Activated CD4-positive, alpha-beta memory T cell treated with anti-CD3 and anti-CD28 coated beads, Interleukin-2, amount 10 ng/mL, durations not matched to agents 7 days and 5 days (primary cell): ENCODE measurements at regions of chr9 and their contacts with region 1.

Region 1: GRCh38 chr9:6412487-6413364 is at the start of gene UHRF2:
- DNase-seq: peak; percentile 100
- H3K4me3 Mint-ChIP-seq: peak within 1 kb of the TSS; percentile 81
- H3K27ac Mint-ChIP-seq: peak within 1 kb of the TSS; percentile 94
- H3K4me1 Mint-ChIP-seq: peaks cover 35% of the 10 kb centered on the region
- H3K27me3 Mint-ChIP-seq: peaks cover 2% of the 10 kb centered on the region
- total RNA-seq, gene UHRF2: 77.3 to 77.9 TPM

Region 2: DNA sequence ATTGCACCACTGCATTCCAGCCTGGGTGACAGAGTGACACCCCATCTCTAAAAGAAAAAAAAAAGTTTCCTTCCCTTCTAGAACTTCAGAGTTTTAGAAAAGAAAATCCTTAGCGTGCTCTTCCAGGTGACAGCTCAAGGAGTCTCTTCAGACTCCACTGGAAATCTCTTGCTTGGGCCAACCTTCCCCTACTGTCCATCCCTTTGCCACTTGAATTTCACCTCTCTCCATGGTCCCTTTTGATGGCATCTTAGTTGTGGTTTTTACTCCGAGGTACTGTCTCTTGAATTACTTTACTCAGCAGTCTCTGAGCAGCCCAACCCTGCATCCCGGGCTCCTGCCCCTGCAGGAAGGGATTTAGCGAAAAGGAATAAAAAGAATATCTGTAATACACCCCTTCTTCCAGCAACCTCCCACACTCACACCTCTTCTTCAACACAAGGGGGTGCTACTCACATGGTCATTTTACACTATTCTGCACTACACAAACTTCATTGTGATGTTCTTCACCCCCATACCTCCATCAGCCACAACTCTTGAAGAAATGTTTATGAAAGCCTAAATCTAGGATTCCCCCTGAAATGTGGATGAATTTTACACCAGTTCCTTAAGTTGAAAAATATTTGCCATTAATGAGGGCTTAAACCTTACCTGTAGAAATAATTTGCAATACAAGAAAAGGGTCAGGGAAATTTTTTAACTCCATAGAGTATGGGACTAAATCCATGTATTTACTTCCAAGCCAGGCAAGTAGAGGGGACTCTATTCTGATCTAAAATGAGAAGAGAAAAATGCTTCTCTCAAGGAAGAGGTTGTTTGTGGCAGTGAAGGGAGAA is 58.7 kb before region 1 on chr9:
- CTCF ChIA-PET with region 1: interaction called, 5 read pairs
- POLR2A ChIA-PET with region 1: interaction called, 13 read pairs
- DNase-seq: peak; percentile 27
- H3K4me3 Mint-ChIP-seq: no peak overlapping the region
- H3K27ac Mint-ChIP-seq: no peak overlapping the region
- H3K4me1 Mint-ChIP-seq: peaks cover 21% of the 10 kb centered on the region
- H3K27me3 Mint-ChIP-seq: peaks cover 19% of the 10 kb centered on the region

Region 3: GRCh38 chr9:6473149-6473548 is 60.4 kb after region 1 on chr9:
- CTCF ChIA-PET with region 1: no interaction called
- POLR2A ChIA-PET with region 1: interaction called, 10 read pairs
- DNase-seq: no peak
- H3K4me3 Mint-ChIP-seq: no peak overlapping the region
- H3K27ac Mint-ChIP-seq: no peak overlapping the region
- H3K4me1 Mint-ChIP-seq: peaks cover 1% of the 10 kb centered on the region
- H3K27me3 Mint-ChIP-seq: no peaks in the 10 kb centered on the region

Region 4: DNA sequence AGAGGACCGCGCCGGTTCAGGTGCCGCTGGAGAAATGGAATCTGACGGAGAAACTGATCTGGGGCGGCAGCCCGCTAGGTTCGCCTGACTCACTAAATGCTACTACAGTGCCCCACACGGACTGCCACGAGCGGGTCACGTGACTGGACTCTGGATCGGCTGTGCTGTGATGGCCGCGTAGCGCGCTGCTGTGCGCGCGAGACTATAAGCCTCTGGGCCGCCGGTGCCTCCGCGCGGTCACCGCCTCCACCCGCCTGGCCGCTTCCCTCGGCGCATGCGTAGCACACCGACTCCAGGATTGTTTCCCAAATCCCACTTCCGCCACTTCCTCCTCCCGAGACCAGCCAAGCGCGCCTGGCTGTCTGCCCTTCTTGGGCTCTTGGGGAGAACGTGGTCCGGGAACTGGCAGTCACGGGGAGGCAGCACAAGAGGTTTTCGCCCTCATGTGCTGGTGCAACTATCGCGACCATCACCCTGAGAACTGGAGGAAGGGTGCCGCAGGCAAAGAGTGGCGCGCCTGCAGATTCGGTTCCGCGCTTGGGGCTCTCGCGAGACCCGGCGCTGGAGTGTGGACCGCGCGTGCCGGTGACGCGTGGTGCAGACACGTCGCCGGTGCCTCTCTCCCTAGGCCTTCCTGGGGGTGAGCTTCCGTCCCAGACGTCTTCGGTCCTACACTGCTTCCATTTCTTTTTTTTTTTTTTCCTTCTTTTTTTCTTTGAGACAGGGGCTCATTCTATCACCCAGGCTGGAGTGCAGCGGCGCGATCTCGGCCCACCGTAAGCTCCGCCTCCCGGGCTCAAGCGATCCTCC is 268.6 kb after region 1 on chr9:
- CTCF ChIA-PET with region 1: no interaction called
- POLR2A ChIA-PET with region 1: interaction called, 43 read pairs
- DNase-seq: peak; percentile 95
- H3K4me3 Mint-ChIP-seq: peak overlapping the region; percentile 94
- H3K27ac Mint-ChIP-seq: peak overlapping the region; percentile 99
- H3K4me1 Mint-ChIP-seq: peaks cover 22% of the 10 kb centered on the region
- H3K27me3 Mint-ChIP-seq: no peaks in the 10 kb centered on the region

Region 5: GRCh38 chr9:6757456-6758247 is 344.9 kb after region 1 on chr9 and contains the start of gene KDM4C:
- CTCF ChIA-PET with region 1: interaction called, 3 read pairs
- POLR2A ChIA-PET with region 1: interaction called, 54 read pairs
- DNase-seq: peak; percentile 94
- H3K4me3 Mint-ChIP-seq: peak within 1 kb of the TSS; percentile 90
- H3K27ac Mint-ChIP-seq: peak within 1 kb of the TSS; percentile 100
- H3K4me1 Mint-ChIP-seq: peaks cover 27% of the 10 kb centered on the region
- H3K27me3 Mint-ChIP-seq: no peaks in the 10 kb centered on the region
- total RNA-seq, gene KDM4C: 49.4 to 50.0 TPM